Mammary epithelial cell (primary cell): ENCODE measurements at regions of chr2 and their contacts with region 1.

Region 1: GRCh38 chr2:241514986-241515737 is 6.8 kb upstream of the STK25 start:
- DNase-seq: no peak
- H3K4me3 ChIP-seq: no peak overlapping the region
- H3K27ac ChIP-seq: no peak overlapping the region
- H3K4me1 ChIP-seq: no peaks in the 10 kb centered on the region
- H3K27me3 ChIP-seq: no peaks in the 10 kb centered on the region
- CTCF ChIP-seq: no peak

Region 2: DNA sequence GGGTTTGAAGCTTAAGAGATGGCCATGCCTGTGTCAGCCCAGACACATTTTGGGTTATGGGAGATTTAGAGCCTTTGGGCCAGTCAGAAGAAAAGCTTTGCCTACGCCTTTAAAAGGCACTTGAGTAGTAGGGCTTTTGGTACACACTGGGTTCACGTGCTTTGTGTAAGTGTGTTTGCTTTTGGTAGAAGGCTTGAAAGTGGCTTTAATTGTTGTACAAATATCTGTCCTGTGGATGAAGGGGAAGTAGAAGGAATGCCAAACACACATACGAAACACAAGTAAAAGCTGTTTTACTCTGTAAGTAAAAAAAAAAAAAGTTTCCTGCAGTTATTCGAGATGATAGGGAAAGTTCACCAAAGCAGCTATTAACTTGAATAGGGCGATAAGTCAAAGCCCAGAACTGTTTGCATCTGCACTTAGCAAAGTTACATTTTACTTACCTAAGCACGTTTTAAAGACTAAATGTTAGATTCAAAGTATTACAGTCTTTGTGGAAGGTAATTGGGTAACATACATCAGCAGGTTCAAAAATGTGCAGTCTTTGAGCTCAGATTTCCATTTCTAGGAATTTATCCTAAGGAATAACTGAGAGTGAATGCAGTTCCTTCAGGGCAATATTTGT is 82.2 kb before region 1 on chr2:
- CTCF ChIA-PET with region 1: no interaction called
- dilution Hi-C with region 1: loop called (anchors 5 kb)
- in situ Hi-C with region 1: no loop called
- intact Hi-C with region 1: no loop called
- DNase-seq: no peak
- H3K4me3 ChIP-seq: no peak overlapping the region
- H3K27ac ChIP-seq: no peak overlapping the region
- H3K4me1 ChIP-seq: no peaks in the 10 kb centered on the region
- H3K27me3 ChIP-seq: no peaks in the 10 kb centered on the region
- CTCF ChIP-seq: no peak

Region 3: DNA sequence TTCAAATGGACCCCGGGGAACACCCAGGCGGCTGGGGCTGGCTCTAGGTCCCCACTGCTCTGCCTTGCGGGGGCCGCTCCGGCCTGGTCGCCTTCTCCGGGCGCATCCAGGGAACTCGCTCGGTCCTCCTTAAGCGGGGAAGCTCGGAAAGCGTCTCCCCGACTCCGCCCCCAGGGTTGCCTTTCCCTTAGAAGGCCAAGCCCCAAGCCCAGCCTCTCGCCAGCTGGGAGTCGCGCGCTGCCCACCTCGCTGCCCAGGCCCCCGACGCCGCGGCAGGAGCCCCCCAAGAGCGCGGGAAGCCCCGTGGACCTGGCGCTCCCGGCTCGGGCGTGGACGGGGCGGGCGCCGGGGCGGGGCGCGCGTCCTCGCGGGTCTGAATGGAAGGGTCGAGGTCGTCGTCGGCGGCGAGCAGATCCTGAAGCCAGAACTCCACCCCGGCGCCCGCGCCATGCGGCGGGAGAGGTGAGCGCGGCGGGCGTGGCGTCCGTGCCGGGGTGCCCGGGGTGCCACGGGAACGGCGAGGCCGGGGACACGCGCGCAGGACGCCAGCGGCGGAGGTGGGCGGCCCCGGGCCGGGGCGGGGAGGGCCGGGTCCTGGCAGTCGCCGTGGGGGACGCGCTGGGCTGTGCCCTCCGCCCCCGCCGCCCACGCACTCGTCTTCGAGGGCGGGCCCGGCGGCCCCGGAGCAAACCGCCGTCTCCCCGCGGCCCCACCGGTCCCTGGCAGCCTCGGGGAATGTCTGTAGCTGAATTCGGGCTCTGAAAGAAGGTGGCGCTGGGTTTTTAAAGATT is 43.6 kb after region 1 on chr2 and contains the start of gene BOK:
- CTCF ChIA-PET with region 1: no interaction called
- dilution Hi-C with region 1: loop called (anchors 5 kb)
- in situ Hi-C with region 1: no loop called
- intact Hi-C with region 1: no loop called
- DNase-seq: peak; percentile 59
- H3K4me3 ChIP-seq: peak within 1 kb of the TSS; percentile 67 to 88 (median 70)
- H3K27ac ChIP-seq: peak within 1 kb of the TSS; percentile 28
- H3K4me1 ChIP-seq: peaks cover 44% of the 10 kb centered on the region
- H3K27me3 ChIP-seq: no peaks in the 10 kb centered on the region
- CTCF ChIP-seq: no peak
- total RNA-seq, gene BOK: 21.3 to 38.5 TPM